ENCODE measurements at regions of chr19 and their contacts with region 1.

Region 1: GRCh38 chr19:8412783-8413628 is at the start of gene MARCHF2:
- DNase-seq: peak; percentile 96 to 98
- ATAC-seq: peak; percentile 98 to 100 (median 99)
- H3K4me3 ChIP-seq: peak within 1 kb of the TSS; percentile 47
- H3K4me3 Mint-ChIP-seq: peak within 1 kb of the TSS; percentile 63
- H3K27ac ChIP-seq: no peak within 1 kb of the TSS
- H3K27ac Mint-ChIP-seq: no peak within 1 kb of the TSS
- H3K4me1 ChIP-seq: peaks cover 10% of the 10 kb centered on the region
- H3K4me1 Mint-ChIP-seq: peaks cover 4 to 5% of the 10 kb centered on the region in 2 donors
- H3K27me3 ChIP-seq: no peaks in the 10 kb centered on the region
- H3K27me3 Mint-ChIP-seq: no peaks in the 10 kb centered on the region
- CTCF ChIP-seq: peak; percentile 63
- total RNA-seq, gene MARCHF2: 32.4 to 42.3 (median 37.2) TPM

Region 2: DNA sequence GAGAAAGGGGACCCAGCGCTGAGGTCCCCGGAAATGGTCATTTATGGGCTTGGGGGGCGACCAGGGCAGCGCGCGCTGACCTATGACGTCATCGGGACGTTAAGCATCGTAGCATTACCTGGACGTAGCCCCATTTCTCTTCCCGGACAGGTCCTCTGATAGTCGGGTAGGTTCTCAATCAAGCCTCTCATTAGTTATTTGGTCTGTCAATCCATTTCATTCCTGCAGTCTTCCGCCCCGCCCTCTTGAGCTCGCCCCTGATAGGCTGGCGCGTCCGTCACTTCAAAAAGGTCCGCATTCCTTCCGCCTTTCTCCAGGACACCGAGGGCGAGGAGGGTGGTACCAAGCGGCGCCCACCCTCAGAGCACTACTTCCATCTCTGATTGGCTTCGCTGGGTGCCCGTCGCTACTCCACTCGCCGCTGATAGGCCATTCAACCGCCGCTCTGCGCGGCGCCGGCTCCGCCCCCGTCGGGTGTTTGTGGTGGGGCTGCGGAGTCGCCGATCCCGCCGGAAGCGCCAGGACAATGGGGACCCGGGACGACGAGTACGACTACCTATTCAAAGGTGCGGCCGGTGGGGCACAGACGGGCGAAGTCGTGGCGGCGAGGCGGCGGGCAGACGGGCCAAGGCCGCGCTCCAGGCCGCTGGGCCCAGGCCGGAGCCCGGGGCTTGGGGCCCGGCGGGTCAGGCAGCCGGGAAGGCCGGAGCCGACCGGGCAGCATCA is 23.0 kb before region 1 on chr19 and contains the start of gene RAB11B:
- intact Hi-C with region 1: loop called (anchors 1 kb)
- DNase-seq: peak; percentile 95 to 99
- ATAC-seq: peak; percentile 85 to 96 (median 87)
- H3K4me3 ChIP-seq: peak within 1 kb of the TSS; percentile 49
- H3K4me3 Mint-ChIP-seq: peak within 1 kb of the TSS; percentile 98
- H3K27ac ChIP-seq: peak within 1 kb of the TSS; percentile 92
- H3K27ac Mint-ChIP-seq: peak within 1 kb of the TSS; percentile 94
- H3K4me1 ChIP-seq: peaks cover 34% of the 10 kb centered on the region
- H3K4me1 Mint-ChIP-seq: peaks cover 16 to 33% of the 10 kb centered on the region in 2 donors
- H3K27me3 ChIP-seq: no peaks in the 10 kb centered on the region
- H3K27me3 Mint-ChIP-seq: no peaks in the 10 kb centered on the region
- CTCF ChIP-seq: no peak
- total RNA-seq, gene RAB11B: 101 to 116 (median 108) TPM

Region 3: DNA sequence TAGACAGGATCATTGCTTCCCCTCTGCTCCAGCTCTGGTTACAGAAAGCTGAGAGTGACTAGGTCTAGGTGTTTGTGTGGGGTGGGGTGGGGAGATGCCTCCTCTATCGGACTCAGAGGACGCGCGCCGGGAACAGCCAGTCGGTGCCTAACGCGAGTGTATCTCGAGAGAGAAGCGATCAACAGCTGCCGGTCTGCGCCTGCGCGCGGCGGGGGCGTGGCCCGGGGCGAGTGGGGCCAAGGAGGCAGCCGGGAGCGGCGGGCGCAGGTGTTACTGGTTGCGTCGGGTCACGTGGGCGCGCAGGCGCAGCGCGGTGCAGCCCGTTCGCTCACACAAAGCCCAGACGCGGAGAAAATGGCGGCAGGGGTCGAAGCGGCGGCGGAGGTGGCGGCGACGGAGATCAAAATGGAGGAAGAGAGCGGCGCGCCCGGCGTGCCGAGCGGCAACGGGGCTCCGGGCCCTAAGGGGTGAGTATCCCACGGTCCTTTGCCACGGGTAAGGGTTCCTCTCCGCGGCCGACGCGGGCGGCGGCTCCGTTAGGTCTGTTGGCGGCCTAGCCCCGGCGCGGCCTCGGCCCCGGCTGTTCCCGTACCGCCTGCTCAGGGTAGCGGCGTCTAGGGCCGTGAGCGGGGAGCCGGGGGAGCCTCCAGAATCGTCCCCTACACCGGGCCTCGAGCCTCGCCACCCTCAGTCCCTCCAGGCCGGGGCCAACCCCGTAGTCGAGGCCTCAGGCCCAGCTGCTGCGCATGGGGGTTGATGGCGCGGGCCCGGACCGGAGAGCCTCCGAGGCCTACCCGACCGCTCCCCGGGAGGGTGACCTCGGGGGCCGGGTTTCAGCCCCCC is 31.9 kb after region 1 on chr19 and contains the start of gene HNRNPM:
- intact Hi-C with region 1: loop called (anchors 2 kb)
- DNase-seq: peak; percentile 99 to 100
- ATAC-seq: peak; percentile 91 to 99 (median 95)
- H3K4me3 ChIP-seq: peak within 1 kb of the TSS; percentile 99
- H3K4me3 Mint-ChIP-seq: peak within 1 kb of the TSS; percentile 97
- H3K27ac ChIP-seq: peak within 1 kb of the TSS; percentile 98
- H3K27ac Mint-ChIP-seq: peak within 1 kb of the TSS; percentile 94 to 100
- H3K4me1 ChIP-seq: peaks cover 36% of the 10 kb centered on the region
- H3K4me1 Mint-ChIP-seq: peaks cover 39 to 45% of the 10 kb centered on the region in 2 donors
- H3K27me3 ChIP-seq: no peaks in the 10 kb centered on the region
- H3K27me3 Mint-ChIP-seq: no peaks in the 10 kb centered on the region
- CTCF ChIP-seq: no peak
- total RNA-seq, gene HNRNPM: 272 to 300 (median 299) TPM

Region 4: GRCh38 chr19:8513687-8514504 is 100.9 kb after region 1 on chr19 and contains the start of gene ZNF414:
- intact Hi-C with region 1: loop called (anchors 10 kb)
- DNase-seq: peak; percentile 98 to 99
- ATAC-seq: peak; percentile 81 to 92 (median 84)
- H3K4me3 ChIP-seq: peak within 1 kb of the TSS; percentile 38
- H3K4me3 Mint-ChIP-seq: peak within 1 kb of the TSS; percentile 97
- H3K27ac ChIP-seq: peak within 1 kb of the TSS; percentile 82
- H3K27ac Mint-ChIP-seq: peak within 1 kb of the TSS; percentile 94 to 100
- H3K4me1 ChIP-seq: peaks cover 68% of the 10 kb centered on the region
- H3K4me1 Mint-ChIP-seq: peaks cover 42 to 61% of the 10 kb centered on the region in 2 donors
- H3K27me3 ChIP-seq: no peaks in the 10 kb centered on the region
- H3K27me3 Mint-ChIP-seq: no peaks in the 10 kb centered on the region
- CTCF ChIP-seq: no peak
- total RNA-seq, gene ZNF414: 42.1 to 46.4 (median 42.3) TPM

Region 5: GRCh38 chr19:8575467-8575997 is 162.5 kb after region 1 on chr19:
- intact Hi-C with region 1: loop called (anchors 2 kb)
- DNase-seq: peak; percentile 47 to 78
- ATAC-seq: peak; percentile 48 to 66 (median 49)
- H3K4me3 ChIP-seq: peak overlapping the region; percentile 85
- H3K4me3 Mint-ChIP-seq: peak overlapping the region; percentile 91
- H3K27ac ChIP-seq: peak overlapping the region; percentile 68
- H3K27ac Mint-ChIP-seq: peak overlapping the region; percentile 90 to 97
- H3K4me1 ChIP-seq: peaks cover 85% of the 10 kb centered on the region
- H3K4me1 Mint-ChIP-seq: peaks cover 69 to 84% of the 10 kb centered on the region in 2 donors
- H3K27me3 ChIP-seq: no peaks in the 10 kb centered on the region
- H3K27me3 Mint-ChIP-seq: no peaks in the 10 kb centered on the region
- CTCF ChIP-seq: peak; percentile 4

Region 6: DNA sequence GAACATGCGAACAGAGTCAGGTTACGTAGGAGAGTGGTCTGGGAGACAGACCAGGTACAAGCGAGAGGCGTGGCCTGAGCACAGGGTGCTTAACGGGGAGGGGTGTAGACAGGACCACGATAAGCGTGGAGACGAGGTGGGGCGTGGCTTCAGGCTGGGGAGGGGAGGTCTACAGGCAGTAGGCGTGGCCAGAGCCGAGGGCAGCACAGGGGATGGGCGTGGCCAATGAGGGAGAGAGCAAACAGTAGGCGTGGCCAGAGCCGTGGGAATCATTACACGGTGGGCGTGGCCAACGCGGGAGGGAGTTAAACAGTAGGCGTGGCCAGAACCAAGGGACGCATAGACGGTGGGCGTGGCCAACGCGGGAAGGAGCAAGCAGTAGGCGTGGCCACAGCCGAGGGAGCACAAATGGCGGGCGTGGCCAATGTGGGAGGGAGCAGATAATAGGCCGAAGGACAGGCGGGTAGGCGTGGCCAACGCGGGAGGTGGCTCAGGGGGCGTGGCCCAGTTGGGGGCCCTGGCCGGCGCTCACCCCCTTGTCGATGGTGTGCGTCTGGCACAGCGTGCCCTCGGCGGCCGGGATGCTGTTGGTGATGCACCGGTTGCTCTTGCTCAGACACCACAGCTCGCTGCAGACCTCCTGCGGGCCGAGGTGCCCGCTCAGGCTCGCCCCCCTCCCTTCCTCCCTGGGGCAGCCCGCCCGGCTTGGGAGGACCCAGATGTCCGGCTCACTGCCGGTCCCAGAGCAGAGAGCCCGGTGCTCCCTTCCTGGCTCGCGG is 179.4 kb after region 1 on chr19:
- intact Hi-C with region 1: loop called (anchors 5 kb)
- DNase-seq: peak; percentile 97 to 99
- ATAC-seq: peak; percentile 86 to 94 (median 87)
- H3K4me3 ChIP-seq: peak overlapping the region; percentile 30
- H3K4me3 Mint-ChIP-seq: peak overlapping the region; percentile 82
- H3K27ac ChIP-seq: no peak overlapping the region
- H3K27ac Mint-ChIP-seq: peak overlapping the region; percentile 72 to 81
- H3K4me1 ChIP-seq: peaks cover 21% of the 10 kb centered on the region
- H3K4me1 Mint-ChIP-seq: peaks cover 24 to 38% of the 10 kb centered on the region in 2 donors
- H3K27me3 ChIP-seq: no peaks in the 10 kb centered on the region
- H3K27me3 Mint-ChIP-seq: no peaks in the 10 kb centered on the region
- CTCF ChIP-seq: no peak

Measured in natural killer cell (primary cell).